ENCODE measurements at regions of chr4 and their contacts with region 1.

Region 1: DNA sequence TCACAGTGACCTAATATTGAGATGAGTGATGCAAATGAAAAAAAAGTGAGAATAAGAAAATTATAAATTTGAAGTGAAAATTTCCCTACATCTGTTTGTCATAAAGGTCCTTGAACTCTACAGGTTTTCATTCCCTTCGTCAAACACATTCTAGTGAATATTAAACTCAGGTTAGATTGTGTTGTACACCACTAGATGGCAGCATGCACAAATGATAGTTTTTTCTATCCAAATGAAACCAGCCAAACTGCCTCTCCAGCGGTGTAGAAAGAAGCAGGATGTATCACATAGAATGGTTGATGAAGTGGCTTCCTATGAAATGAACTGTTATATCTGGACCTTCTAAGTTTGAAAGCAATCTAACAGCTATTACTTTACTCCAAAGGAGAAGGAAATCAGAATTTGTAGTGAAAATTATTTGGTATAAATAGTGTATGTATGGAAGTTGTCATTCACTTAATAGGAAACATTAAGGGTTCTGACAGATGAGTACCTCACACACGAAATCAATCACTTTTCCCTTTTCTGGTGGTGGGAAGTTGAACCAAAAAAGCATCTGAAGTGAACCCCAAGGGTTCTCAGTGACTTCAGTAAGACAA is 382.7 kb downstream of the UNC5C start:
- DNase-seq: no peak
- ATAC-seq: peak; percentile 76
- H3K4me3 ChIP-seq: no peak overlapping the region
- H3K27ac ChIP-seq: no peak overlapping the region
- H3K4me1 ChIP-seq: no peaks in the 10 kb centered on the region
- H3K27me3 ChIP-seq: no peaks in the 10 kb centered on the region

Region 2: GRCh38 chr4:95549246-95550114 is 383.5 kb after region 1 on chr4:
- intact Hi-C with region 1: loop called in 1 of 2 experiments (anchors 10 kb)
- DNase-seq: peak; percentile 70 to 91
- ATAC-seq: peak; percentile 80
- H3K4me3 ChIP-seq: peak overlapping the region; percentile 78 to 95
- H3K27ac ChIP-seq: peak overlapping the region; percentile 72 to 91
- H3K4me1 ChIP-seq: no peaks in the 10 kb centered on the region
- H3K27me3 ChIP-seq: no peaks in the 10 kb centered on the region

Region 3: GRCh38 chr4:96035727-96036126 is 869.7 kb after region 1 on chr4:
- intact Hi-C with region 1: loop called in 1 of 2 experiments (anchors 10 kb)
- DNase-seq: no peak
- ATAC-seq: no peak
- H3K4me3 ChIP-seq: no peak overlapping the region
- H3K27ac ChIP-seq: no peak overlapping the region
- H3K4me1 ChIP-seq: no peaks in the 10 kb centered on the region
- H3K27me3 ChIP-seq: no peaks in the 10 kb centered on the region

Measured in aorta (tissue), 5 donors.